ENCODE measurements at regions of chr9 and their contacts with region 1.

Region 1: GRCh38 chr9:130235897-130236668 is 29.5 kb upstream of the HMCN2 start:
- DNase-seq: no peak
- H3K4me3 ChIP-seq: no peak overlapping the region
- H3K27ac ChIP-seq: peak overlapping the region; percentile 24
- H3K4me1 ChIP-seq: peaks cover 23% of the 10 kb centered on the region
- H3K27me3 ChIP-seq: no peaks in the 10 kb centered on the region
- CTCF ChIP-seq: peak; percentile 98 to 100 (median 99)
- POLR2A ChIP-seq: no peak

Region 2: GRCh38 chr9:129802851-129803675 is 433.0 kb before region 1 on chr9 and contains the start of gene TOR1B:
- intact Hi-C with region 1: no loop called
- DNase-seq: peak in 1 of 2 donors; percentile 92
- H3K4me3 ChIP-seq: peak within 1 kb of the TSS; percentile 67 to 100
- H3K27ac ChIP-seq: peak within 1 kb of the TSS; percentile 75
- H3K4me1 ChIP-seq: peaks cover 10% of the 10 kb centered on the region
- H3K27me3 ChIP-seq: no peaks in the 10 kb centered on the region
- CTCF ChIP-seq: no peak
- POLR2A ChIP-seq: peak in 1 of 2 donors; percentile 71
- total RNA-seq, gene TOR1B: 14.5 TPM

Region 3: DNA sequence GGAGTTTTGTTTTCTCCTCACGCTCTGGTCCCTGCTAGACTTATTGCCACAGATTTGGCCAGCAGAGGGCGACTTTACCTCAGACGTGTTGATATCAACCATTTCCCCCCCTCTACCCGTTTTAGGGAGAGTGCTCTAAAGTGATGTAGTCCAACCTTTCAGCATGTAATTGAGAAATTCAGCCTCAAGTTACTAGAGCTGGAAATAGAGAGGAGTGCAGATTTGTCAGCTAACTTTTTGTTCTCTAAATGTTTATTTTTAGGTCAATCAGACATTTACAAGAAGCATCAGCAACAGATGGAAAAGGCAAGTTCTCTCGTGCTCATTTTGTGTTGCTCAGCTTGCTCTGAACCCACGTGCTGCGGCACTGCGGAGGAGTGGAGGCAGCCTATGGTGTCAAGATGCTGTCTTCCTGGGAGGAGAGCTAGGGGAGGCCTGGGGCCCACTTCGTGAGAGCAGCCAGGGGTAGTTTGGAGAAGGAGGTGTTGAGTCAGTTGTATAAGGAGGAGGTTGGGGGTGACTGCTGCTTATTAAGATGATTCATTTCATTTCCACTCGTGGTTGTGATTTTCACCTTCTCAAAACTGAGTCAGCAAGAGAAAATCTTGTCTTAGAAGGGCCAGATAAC is 128.7 kb before region 1 on chr9:
- intact Hi-C with region 1: loop called (anchors 2 kb)
- DNase-seq: peak in 1 of 2 donors; percentile 95
- H3K4me3 ChIP-seq: no peak overlapping the region
- H3K27ac ChIP-seq: peak overlapping the region; percentile 44
- H3K4me1 ChIP-seq: peaks cover 8% of the 10 kb centered on the region
- H3K27me3 ChIP-seq: no peaks in the 10 kb centered on the region
- CTCF ChIP-seq: peak; percentile 67 to 88 (median 81)
- POLR2A ChIP-seq: no peak